ENCODE measurements at regions of chr3 and their contacts with region 1.

Region 1: DNA sequence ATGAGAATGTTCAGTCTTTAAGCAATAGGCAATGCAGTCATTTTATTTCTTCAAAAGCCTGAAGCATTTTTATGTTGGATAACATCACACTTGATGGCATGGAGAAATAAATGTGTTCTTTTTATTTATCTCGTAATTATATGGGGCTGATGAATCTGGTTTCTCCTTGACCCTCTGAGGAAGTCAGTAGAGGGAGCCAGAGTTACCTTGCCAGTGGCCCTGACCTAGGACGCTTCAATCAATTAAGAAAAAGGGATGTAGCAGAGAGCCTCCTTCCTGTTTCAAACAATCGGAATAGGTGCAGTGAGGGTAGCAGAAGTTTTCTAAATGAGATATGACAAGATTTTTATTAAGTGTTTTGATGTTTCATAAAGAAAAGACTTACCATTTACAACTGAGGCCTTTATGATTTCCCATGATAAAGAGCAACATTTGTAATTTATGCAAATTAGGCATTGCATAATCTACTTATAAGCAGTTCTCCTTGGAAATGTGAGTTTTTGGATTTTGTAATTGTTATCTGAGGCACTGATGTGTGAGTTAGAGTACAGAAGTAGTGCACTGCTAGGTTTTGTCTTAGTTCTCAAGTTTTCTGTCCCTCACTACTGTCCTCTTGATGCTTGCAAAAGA is 129.1 kb downstream of the RAP2B start:
- DNase-seq: peak in 3 of 5 donors; percentile 15 to 21 (median 21)
- H3K4me3 ChIP-seq: no peak overlapping the region
- H3K4me3 Mint-ChIP-seq: peak overlapping the region in 3 of 8 donors; percentile 1 to 46 (median 35)
- H3K27ac ChIP-seq: no peak overlapping the region
- H3K27ac Mint-ChIP-seq: peak overlapping the region in 2 of 7 donors; percentile 50 to 71
- H3K4me1 ChIP-seq: peaks cover 50% of the 10 kb centered on the region
- H3K4me1 Mint-ChIP-seq: peaks cover 35 to 49% (median 43%) of the 10 kb centered on the region in 4 donors
- H3K27me3 ChIP-seq: no peaks in the 10 kb centered on the region
- H3K27me3 Mint-ChIP-seq: no peaks in the 10 kb centered on the region

Region 2: DNA sequence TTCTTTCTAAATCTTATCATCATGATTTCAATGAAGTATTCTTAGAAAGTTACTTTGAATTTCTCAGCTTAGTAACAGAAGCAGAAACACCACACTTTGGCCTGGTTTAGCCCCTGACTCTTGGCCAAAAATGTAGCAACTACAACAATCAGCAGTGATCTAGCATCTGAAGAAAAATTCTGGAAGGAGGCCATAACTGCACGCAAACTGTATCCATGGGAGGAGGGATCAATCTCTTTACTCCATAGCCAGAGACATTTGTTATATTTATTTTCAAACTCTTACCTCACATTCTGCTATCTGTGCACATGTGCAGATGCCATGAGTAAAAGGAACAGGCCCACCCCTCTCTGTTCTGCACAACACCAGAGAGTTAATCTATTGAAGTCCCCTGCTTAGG is 707.2 kb before region 1 on chr3:
- CTCF ChIA-PET with region 1: no interaction called
- POLR2A ChIA-PET with region 1: no interaction called
- intact Hi-C with region 1: no loop called
- DNase-seq: no peak
- H3K4me3 ChIP-seq: no peak overlapping the region
- H3K4me3 Mint-ChIP-seq: no peak overlapping the region
- H3K27ac ChIP-seq: no peak overlapping the region
- H3K27ac Mint-ChIP-seq: no peak overlapping the region
- H3K4me1 ChIP-seq: no peaks in the 10 kb centered on the region
- H3K4me1 Mint-ChIP-seq: no peaks in the 10 kb centered on the region
- H3K27me3 ChIP-seq: no peaks in the 10 kb centered on the region
- H3K27me3 Mint-ChIP-seq: peaks cover 10% of the 10 kb centered on the region in 2 donors

Region 3: DNA sequence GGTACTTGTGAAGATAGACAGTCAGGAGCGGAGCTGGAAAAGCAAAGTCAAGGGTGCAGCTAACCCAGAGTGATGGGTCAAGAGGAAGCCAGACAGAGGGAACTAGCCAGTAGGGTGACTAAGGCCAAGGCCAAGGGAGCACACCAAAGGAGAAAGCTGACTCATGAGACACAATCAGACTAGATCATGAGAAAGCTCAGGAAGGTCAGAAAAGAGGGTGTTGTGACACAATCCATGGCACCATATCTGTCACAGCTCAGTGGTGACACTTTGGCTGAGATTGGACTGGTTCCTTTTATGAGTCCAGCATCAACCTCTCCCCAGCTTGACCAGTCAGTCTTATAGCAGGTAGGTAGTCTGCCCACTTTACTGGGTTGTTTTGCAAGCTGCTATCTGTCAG is 434.1 kb before region 1 on chr3:
- CTCF ChIA-PET with region 1: no interaction called
- POLR2A ChIA-PET with region 1: no interaction called
- intact Hi-C with region 1: no loop called
- DNase-seq: no peak
- H3K4me3 ChIP-seq: no peak overlapping the region
- H3K4me3 Mint-ChIP-seq: no peak overlapping the region
- H3K27ac ChIP-seq: no peak overlapping the region
- H3K27ac Mint-ChIP-seq: no peak overlapping the region
- H3K4me1 ChIP-seq: no peaks in the 10 kb centered on the region
- H3K4me1 Mint-ChIP-seq: no peaks in the 10 kb centered on the region
- H3K27me3 ChIP-seq: no peaks in the 10 kb centered on the region
- H3K27me3 Mint-ChIP-seq: no peaks in the 10 kb centered on the region

Region 4: GRCh38 chr3:153026026-153026425 is 265.1 kb before region 1 on chr3:
- CTCF ChIA-PET with region 1: interaction called, 4 read pairs
- POLR2A ChIA-PET with region 1: no interaction called
- intact Hi-C with region 1: loop called (anchors 1 kb)
- DNase-seq: peak in 4 of 5 donors; percentile 22 to 29 (median 26)
- H3K4me3 ChIP-seq: no peak overlapping the region
- H3K4me3 Mint-ChIP-seq: no peak overlapping the region
- H3K27ac ChIP-seq: no peak overlapping the region
- H3K27ac Mint-ChIP-seq: no peak overlapping the region
- H3K4me1 ChIP-seq: no peaks in the 10 kb centered on the region
- H3K4me1 Mint-ChIP-seq: no peaks in the 10 kb centered on the region
- H3K27me3 ChIP-seq: no peaks in the 10 kb centered on the region
- H3K27me3 Mint-ChIP-seq: peaks cover 2 to 11% of the 10 kb centered on the region in 2 donors

Region 5: DNA sequence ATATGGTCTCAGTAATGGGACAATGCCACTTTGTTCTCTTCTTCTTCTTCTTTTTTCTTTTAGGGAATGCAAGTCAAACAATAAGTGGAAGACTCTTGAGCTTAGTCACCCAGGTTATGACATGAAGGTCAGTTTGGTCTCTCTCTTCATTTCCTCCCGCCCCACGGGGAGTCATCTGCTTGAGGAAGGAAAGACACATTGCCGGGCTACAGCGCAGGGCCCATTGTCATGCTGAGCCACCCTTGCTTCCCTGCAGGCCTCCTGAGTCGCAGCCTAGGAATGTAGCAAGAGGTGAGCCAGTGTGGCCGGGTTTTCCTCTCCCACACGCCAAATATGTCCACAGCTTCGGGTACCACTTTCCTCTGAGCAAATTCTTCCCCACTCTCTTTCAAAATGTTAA is 81.6 kb before region 1 on chr3:
- CTCF ChIA-PET with region 1: interaction called, 117 read pairs
- POLR2A ChIA-PET with region 1: interaction called, 9 read pairs
- intact Hi-C with region 1: loop called (anchors 1 kb)
- DNase-seq: no peak
- H3K4me3 ChIP-seq: no peak overlapping the region
- H3K4me3 Mint-ChIP-seq: peak overlapping the region in 6 of 8 donors; percentile 59 to 80 (median 72)
- H3K27ac ChIP-seq: no peak overlapping the region
- H3K27ac Mint-ChIP-seq: peak overlapping the region in 5 of 7 donors; percentile 54 to 85 (median 72)
- H3K4me1 ChIP-seq: peaks cover 20% of the 10 kb centered on the region
- H3K4me1 Mint-ChIP-seq: peaks cover 26 to 42% (median 33%) of the 10 kb centered on the region in 4 donors
- H3K27me3 ChIP-seq: no peaks in the 10 kb centered on the region
- H3K27me3 Mint-ChIP-seq: no peaks in the 10 kb centered on the region

Region 6: DNA sequence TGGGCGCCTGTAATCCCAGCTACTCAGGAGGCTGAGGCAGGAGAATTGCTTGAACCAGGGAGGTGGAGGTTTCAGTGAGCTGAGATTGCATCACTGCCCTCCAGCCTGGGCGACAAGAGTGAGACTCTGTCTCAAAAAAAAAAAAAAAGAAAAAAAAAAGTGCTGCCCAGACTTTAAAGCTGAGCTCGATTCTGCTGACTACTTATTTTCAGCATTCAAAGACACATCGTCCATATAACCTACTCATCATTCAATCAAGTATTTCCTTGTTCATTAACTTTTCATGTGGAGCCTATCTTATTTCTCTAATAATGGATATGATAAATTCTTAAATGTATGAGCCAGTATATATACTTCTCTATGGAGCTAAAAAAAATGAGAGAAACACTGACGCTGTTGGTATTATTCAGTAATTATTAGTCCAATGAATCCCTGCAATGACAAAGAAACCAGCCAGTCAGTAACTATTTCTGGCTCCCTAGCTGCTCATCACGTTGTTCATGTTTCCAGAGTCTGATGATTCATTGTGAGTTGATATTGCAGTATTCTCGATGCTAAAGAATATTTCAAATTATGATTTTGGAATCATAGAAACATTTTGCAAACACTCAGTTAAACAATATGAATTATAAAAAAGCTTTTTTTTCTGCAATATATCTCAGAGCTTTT is 17.3 kb before region 1 on chr3:
- CTCF ChIA-PET with region 1: interaction called, 11 read pairs
- POLR2A ChIA-PET with region 1: interaction called, 3 read pairs
- intact Hi-C with region 1: no loop called
- DNase-seq: no peak
- H3K4me3 ChIP-seq: no peak overlapping the region
- H3K4me3 Mint-ChIP-seq: no peak overlapping the region
- H3K27ac ChIP-seq: no peak overlapping the region
- H3K27ac Mint-ChIP-seq: peak overlapping the region in 1 of 7 donors; percentile 46
- H3K4me1 ChIP-seq: peaks cover 4% of the 10 kb centered on the region
- H3K4me1 Mint-ChIP-seq: peaks cover 13 to 29% (median 19%) of the 10 kb centered on the region in 4 donors
- H3K27me3 ChIP-seq: no peaks in the 10 kb centered on the region
- H3K27me3 Mint-ChIP-seq: no peaks in the 10 kb centered on the region

Region 7: DNA sequence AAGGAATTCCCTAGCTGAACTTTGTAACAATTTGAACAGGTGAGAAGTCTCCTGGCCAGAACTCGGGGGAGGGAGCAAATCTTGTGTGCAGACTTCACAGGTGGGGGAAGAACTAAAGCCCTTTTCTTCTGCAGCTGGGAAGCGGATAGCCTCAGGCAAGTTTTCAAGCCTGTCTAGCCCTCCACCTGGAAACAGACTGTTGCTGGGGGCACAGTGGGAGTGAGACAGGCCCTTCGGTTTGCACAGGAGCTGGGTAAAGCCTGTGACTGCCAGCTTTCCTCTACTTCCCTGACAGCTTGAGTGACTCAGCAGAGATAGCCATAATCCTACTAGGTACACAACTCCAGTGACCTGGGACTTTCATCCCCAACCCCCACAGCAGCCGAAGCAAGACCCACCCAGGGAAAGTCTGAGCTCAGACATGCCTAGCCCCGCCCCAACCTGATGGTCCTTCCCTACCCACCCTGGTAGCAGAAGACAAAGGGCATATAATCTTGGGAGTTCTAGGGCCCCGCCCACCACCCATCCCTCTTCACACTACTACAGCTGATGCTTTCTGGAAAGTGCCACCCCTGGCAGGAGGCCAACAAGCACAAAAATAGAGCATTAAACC is 349.6 kb after region 1 on chr3:
- CTCF ChIA-PET with region 1: interaction called, 17 read pairs
- POLR2A ChIA-PET with region 1: interaction called, 3 read pairs
- intact Hi-C with region 1: no loop called
- DNase-seq: peak in 1 of 5 donors; percentile 36
- H3K4me3 ChIP-seq: no peak overlapping the region
- H3K4me3 Mint-ChIP-seq: no peak overlapping the region
- H3K27ac ChIP-seq: no peak overlapping the region
- H3K27ac Mint-ChIP-seq: peak overlapping the region in 3 of 7 donors; percentile 12 to 63 (median 18)
- H3K4me1 ChIP-seq: peaks cover 41% of the 10 kb centered on the region
- H3K4me1 Mint-ChIP-seq: peaks cover 39 to 56% (median 40%) of the 10 kb centered on the region in 4 donors
- H3K27me3 ChIP-seq: no peaks in the 10 kb centered on the region
- H3K27me3 Mint-ChIP-seq: no peaks in the 10 kb centered on the region

Region 8: GRCh38 chr3:153818338-153818737 is 527.2 kb after region 1 on chr3:
- CTCF ChIA-PET with region 1: no interaction called
- POLR2A ChIA-PET with region 1: no interaction called
- intact Hi-C with region 1: no loop called
- DNase-seq: no peak
- H3K4me3 ChIP-seq: no peak overlapping the region
- H3K4me3 Mint-ChIP-seq: no peak overlapping the region
- H3K27ac ChIP-seq: no peak overlapping the region
- H3K27ac Mint-ChIP-seq: no peak overlapping the region
- H3K4me1 ChIP-seq: peaks cover 18% of the 10 kb centered on the region
- H3K4me1 Mint-ChIP-seq: peaks cover 0 to 12% (median 2%) of the 10 kb centered on the region in 4 donors
- H3K27me3 ChIP-seq: no peaks in the 10 kb centered on the region
- H3K27me3 Mint-ChIP-seq: no peaks in the 10 kb centered on the region

Region 9: GRCh38 chr3:154018100-154018696 is 727.0 kb after region 1 on chr3:
- CTCF ChIA-PET with region 1: no interaction called
- POLR2A ChIA-PET with region 1: no interaction called
- intact Hi-C with region 1: loop called (anchors 2 kb)
- DNase-seq: peak in 4 of 5 donors; percentile 4 to 12 (median 12)
- H3K4me3 ChIP-seq: no peak overlapping the region
- H3K4me3 Mint-ChIP-seq: no peak overlapping the region
- H3K27ac ChIP-seq: no peak overlapping the region
- H3K27ac Mint-ChIP-seq: no peak overlapping the region
- H3K4me1 ChIP-seq: no peaks in the 10 kb centered on the region
- H3K4me1 Mint-ChIP-seq: no peaks in the 10 kb centered on the region
- H3K27me3 ChIP-seq: peaks cover 5% of the 10 kb centered on the region
- H3K27me3 Mint-ChIP-seq: peaks cover 1 to 2% of the 10 kb centered on the region in 2 donors

Measured in CD4-positive, alpha-beta memory T cell (primary cell).